ENCODE measurements at regions of chr2 and their contacts with region 1.

Region 1: GRCh38 chr2:230847883-230848388 is 16.8 kb upstream of the ITM2C start:
- DNase-seq: peak; percentile 94
- CTCF ChIP-seq: peak; percentile 89

Region 2: DNA sequence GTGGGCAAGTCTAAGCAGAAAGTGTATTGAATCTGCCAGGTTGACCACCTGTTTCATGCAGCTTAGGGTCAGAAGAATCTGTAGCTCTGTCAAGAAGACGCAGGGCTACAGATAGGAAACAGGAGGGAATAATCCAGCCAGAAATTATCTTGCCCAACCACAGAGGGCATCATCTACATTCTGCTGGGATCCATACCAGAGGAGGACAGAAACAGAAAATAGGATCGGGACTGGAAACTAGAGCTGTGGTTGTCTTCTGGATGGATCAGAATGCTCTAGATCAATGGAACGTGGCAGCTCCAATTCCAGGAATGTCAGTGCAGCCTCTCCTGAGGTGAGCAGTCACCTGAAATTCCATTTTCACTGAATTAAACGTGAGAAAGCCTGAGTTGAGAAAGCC is 151.5 kb after region 1 on chr2:
- in situ Hi-C with region 1: loop called (anchors 10 kb)
- DNase-seq: no peak
- CTCF ChIP-seq: no peak